ENCODE measurements at regions of chr11 and their contacts with region 1.

Region 1: GRCh38 chr11:60485986-60486385 is 6.6 kb upstream of the MS4A12 start:
- DNase-seq: peak; percentile 86
- ATAC-seq: peak; percentile 100
- H3K4me3 ChIP-seq: no peak overlapping the region
- H3K27ac ChIP-seq: no peak overlapping the region
- H3K4me1 ChIP-seq: peaks cover 9% of the 10 kb centered on the region
- H3K27me3 ChIP-seq: no peaks in the 10 kb centered on the region
- CTCF ChIP-seq: peak; percentile 91 to 100 (median 99); a peak in 5 of 6 replicates
- EP300 ChIP-seq: no peak
- POLR2A ChIP-seq: no peak
- RAD21 ChIP-seq: peak; percentile 93

Region 2: GRCh38 chr11:60204922-60205321 is 281.1 kb before region 1 on chr11:
- CTCF ChIA-PET with region 1: no interaction called
- POLR2A ChIA-PET with region 1: no interaction called
- RAD21 ChIA-PET with region 1: no interaction called
- SMC1A ChIA-PET with region 1: no interaction called
- in situ Hi-C with region 1: no loop called
- intact Hi-C with region 1: no loop called
- DNase-seq: no peak
- ATAC-seq: peak; percentile 72
- H3K4me3 ChIP-seq: no peak overlapping the region
- H3K27ac ChIP-seq: no peak overlapping the region
- H3K4me1 ChIP-seq: peaks cover 8% of the 10 kb centered on the region
- H3K27me3 ChIP-seq: no peaks in the 10 kb centered on the region
- CTCF ChIP-seq: no peak
- EP300 ChIP-seq: peak; percentile 76 to 90
- POLR2A ChIP-seq: no peak
- RAD21 ChIP-seq: no peak

Region 3: GRCh38 chr11:60235321-60235720 is 250.7 kb before region 1 on chr11:
- CTCF ChIA-PET with region 1: no interaction called
- POLR2A ChIA-PET with region 1: no interaction called
- RAD21 ChIA-PET with region 1: no interaction called
- SMC1A ChIA-PET with region 1: no interaction called
- in situ Hi-C with region 1: no loop called
- intact Hi-C with region 1: no loop called
- DNase-seq: no peak
- ATAC-seq: no peak
- H3K4me3 ChIP-seq: no peak overlapping the region
- H3K27ac ChIP-seq: no peak overlapping the region
- H3K4me1 ChIP-seq: no peaks in the 10 kb centered on the region
- H3K27me3 ChIP-seq: no peaks in the 10 kb centered on the region
- CTCF ChIP-seq: no peak
- EP300 ChIP-seq: no peak
- POLR2A ChIP-seq: no peak
- RAD21 ChIP-seq: no peak

Region 4: GRCh38 chr11:60274416-60274815 is 211.6 kb before region 1 on chr11:
- CTCF ChIA-PET with region 1: interaction called, 3 read pairs
- POLR2A ChIA-PET with region 1: no interaction called
- RAD21 ChIA-PET with region 1: no interaction called
- SMC1A ChIA-PET with region 1: interaction called, 4 read pairs
- in situ Hi-C with region 1: loop called (anchors 5 kb)
- intact Hi-C with region 1: no loop called
- DNase-seq: no peak
- ATAC-seq: no peak
- H3K4me3 ChIP-seq: no peak overlapping the region
- H3K27ac ChIP-seq: no peak overlapping the region
- H3K4me1 ChIP-seq: no peaks in the 10 kb centered on the region
- H3K27me3 ChIP-seq: no peaks in the 10 kb centered on the region
- CTCF ChIP-seq: no peak
- EP300 ChIP-seq: no peak
- POLR2A ChIP-seq: no peak
- RAD21 ChIP-seq: no peak

Region 5: GRCh38 chr11:60615497-60615896 is 129.5 kb after region 1 on chr11:
- CTCF ChIA-PET with region 1: interaction called, 19 read pairs
- POLR2A ChIA-PET with region 1: no interaction called
- RAD21 ChIA-PET with region 1: interaction called, 13 read pairs
- SMC1A ChIA-PET with region 1: interaction called, 27 read pairs
- in situ Hi-C with region 1: loop called (anchors 5 kb)
- intact Hi-C with region 1: loop called (anchors 1 kb)
- DNase-seq: no peak
- ATAC-seq: no peak
- H3K4me3 ChIP-seq: no peak overlapping the region
- H3K27ac ChIP-seq: no peak overlapping the region
- H3K4me1 ChIP-seq: no peaks in the 10 kb centered on the region
- H3K27me3 ChIP-seq: no peaks in the 10 kb centered on the region
- CTCF ChIP-seq: no peak
- EP300 ChIP-seq: no peak
- POLR2A ChIP-seq: no peak
- RAD21 ChIP-seq: no peak

Region 6: DNA sequence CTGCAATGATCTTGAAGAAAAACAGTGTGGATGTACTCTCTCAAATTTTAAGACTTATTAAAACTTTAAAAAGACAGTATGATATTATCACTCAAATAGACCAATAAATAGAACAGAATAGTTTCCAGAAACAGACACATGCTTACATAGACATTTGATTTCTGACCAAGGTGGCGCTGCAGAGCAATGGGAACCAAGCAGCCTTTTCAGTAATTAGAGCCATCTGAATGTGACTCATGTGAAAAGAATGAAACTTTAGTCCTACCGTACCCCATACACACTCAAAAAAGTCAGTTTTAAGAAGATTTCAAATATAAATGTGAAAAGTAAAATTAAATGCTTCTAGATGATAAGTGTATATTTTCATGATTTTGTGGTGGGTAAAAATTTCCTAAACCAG is 139.3 kb after region 1 on chr11:
- CTCF ChIA-PET with region 1: interaction called, 3 read pairs
- POLR2A ChIA-PET with region 1: no interaction called
- RAD21 ChIA-PET with region 1: no interaction called
- SMC1A ChIA-PET with region 1: interaction called, 27 read pairs
- in situ Hi-C with region 1: no loop called
- intact Hi-C with region 1: loop called (anchors 5 kb)
- DNase-seq: no peak
- ATAC-seq: peak; percentile 61
- H3K4me3 ChIP-seq: no peak overlapping the region
- H3K27ac ChIP-seq: no peak overlapping the region
- H3K4me1 ChIP-seq: no peaks in the 10 kb centered on the region
- H3K27me3 ChIP-seq: no peaks in the 10 kb centered on the region
- CTCF ChIP-seq: peak; percentile 17 to 22 (median 20); a peak in 3 of 6 replicates
- EP300 ChIP-seq: no peak
- POLR2A ChIP-seq: no peak
- RAD21 ChIP-seq: no peak

Region 7: DNA sequence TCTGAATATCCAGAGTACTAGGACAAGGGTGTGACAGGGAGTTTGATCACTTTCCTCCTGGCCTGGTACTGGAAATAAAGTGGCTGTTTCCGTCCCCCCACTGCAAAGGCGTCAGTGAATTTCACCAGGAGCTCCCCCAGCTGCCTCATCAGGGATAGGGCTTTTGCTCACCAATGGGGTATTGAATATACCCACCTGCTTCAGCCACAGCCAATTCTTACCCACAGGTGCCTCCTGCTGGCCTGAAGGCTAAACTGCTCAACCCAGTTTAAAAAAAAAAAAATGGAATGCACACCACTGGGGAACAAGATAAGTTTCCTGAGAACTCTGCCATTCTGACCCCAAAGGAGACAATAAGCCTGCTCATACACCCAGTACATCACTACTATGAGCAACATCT is 148.1 kb after region 1 on chr11:
- CTCF ChIA-PET with region 1: interaction called, 5 read pairs
- POLR2A ChIA-PET with region 1: interaction called, 9 read pairs
- RAD21 ChIA-PET with region 1: no interaction called
- SMC1A ChIA-PET with region 1: interaction called, 5 read pairs
- in situ Hi-C with region 1: no loop called
- intact Hi-C with region 1: loop called (anchors 5 kb)
- DNase-seq: peak; percentile 19
- ATAC-seq: peak; percentile 85
- H3K4me3 ChIP-seq: no peak overlapping the region
- H3K27ac ChIP-seq: 0 out of 2 replicates have a peak overlapping the region, but pooled peaks have one; percentile 2
- H3K4me1 ChIP-seq: peaks cover 27% of the 10 kb centered on the region
- H3K27me3 ChIP-seq: no peaks in the 10 kb centered on the region
- CTCF ChIP-seq: peak; percentile 43 to 60 (median 56)
- EP300 ChIP-seq: no peak
- POLR2A ChIP-seq: no peak
- RAD21 ChIP-seq: peak; percentile 76

Region 8: GRCh38 chr11:60756307-60757032 is 270.5 kb after region 1 on chr11 and contains the start of gene MS4A15:
- CTCF ChIA-PET with region 1: no interaction called
- POLR2A ChIA-PET with region 1: no interaction called
- RAD21 ChIA-PET with region 1: no interaction called
- SMC1A ChIA-PET with region 1: no interaction called
- in situ Hi-C with region 1: no loop called
- intact Hi-C with region 1: loop called (anchors 1 kb)
- DNase-seq: no peak
- ATAC-seq: peak; percentile 68
- H3K4me3 ChIP-seq: no peak within 1 kb of the TSS
- H3K27ac ChIP-seq: no peak within 1 kb of the TSS
- H3K4me1 ChIP-seq: peaks cover 20% of the 10 kb centered on the region
- H3K27me3 ChIP-seq: no peaks in the 10 kb centered on the region; a peak in 1 of 4 replicates
- CTCF ChIP-seq: peak; percentile 40 to 60 (median 55)
- EP300 ChIP-seq: no peak
- POLR2A ChIP-seq: no peak
- RAD21 ChIP-seq: peak; percentile 68
- polyA plus RNA-seq, gene MS4A15: 0.05 to 0.08 TPM